Mucosa of descending colon (tissue), 3 donors: ENCODE measurements at regions of chr5 and their contacts with region 1.

Region 1: GRCh38 chr5:82519558-82519957 is 241.4 kb upstream of the RPS23 start:
- DNase-seq: no peak
- ATAC-seq: no peak
- H3K4me3 ChIP-seq: no peak overlapping the region
- H3K4me1 ChIP-seq: no peaks in the 10 kb centered on the region
- CTCF ChIP-seq: no peak

Region 2: DNA sequence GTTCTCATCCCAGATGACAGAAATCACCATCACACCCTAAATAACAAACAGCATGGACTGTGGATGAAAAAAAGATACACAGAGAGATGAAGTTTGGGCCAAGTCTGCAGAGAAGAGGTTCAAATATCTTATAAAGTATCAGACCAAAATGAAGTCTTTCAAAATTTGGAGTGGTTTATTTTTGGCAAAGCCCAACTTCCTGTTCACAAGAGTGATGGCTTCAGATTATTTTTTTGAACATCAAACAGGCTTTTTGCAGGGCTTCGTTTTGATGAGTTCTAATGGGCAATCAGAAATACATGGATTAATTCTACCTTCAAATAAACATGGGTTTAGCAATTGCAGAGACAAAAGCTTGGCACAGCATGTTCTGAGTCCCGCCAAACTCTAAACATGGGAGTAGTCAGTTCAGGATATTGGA is 136.8 kb after region 1 on chr5:
- intact Hi-C with region 1: loop called in 1 of 2 experiments (anchors 5 kb)
- DNase-seq: no peak
- ATAC-seq: no peak
- H3K4me3 ChIP-seq: no peak overlapping the region
- H3K4me1 ChIP-seq: no peaks in the 10 kb centered on the region
- CTCF ChIP-seq: no peak